Activated T-helper 1 cell treated with anti-CD3 and anti-CD28 coated beads, Interleukin-12 subunit alpha, Interleukin-12 subunit beta, Interleukin-2, Interleukin-4 antibody, amounts not matched to agents 30 ng/mL and 10 ng/mL and 1 ng/mL, durations not matched to agents 14 hours and 24 hours and 36 hours (primary cell): ENCODE measurements at regions of chr15 and their contacts with region 1.

Region 1: GRCh38 chr15:66356345-66357236 is at the start of gene TIPIN:
- DNase-seq: peak; percentile 96
- H3K4me3 Mint-ChIP-seq: peak within 1 kb of the TSS; percentile 96
- H3K27ac Mint-ChIP-seq: peak within 1 kb of the TSS; percentile 97
- H3K4me1 Mint-ChIP-seq: peaks cover 35% of the 10 kb centered on the region
- H3K27me3 Mint-ChIP-seq: no peaks in the 10 kb centered on the region
- total RNA-seq, gene TIPIN: 49.2 and 56.0 TPM in 2 replicates

Region 2: DNA sequence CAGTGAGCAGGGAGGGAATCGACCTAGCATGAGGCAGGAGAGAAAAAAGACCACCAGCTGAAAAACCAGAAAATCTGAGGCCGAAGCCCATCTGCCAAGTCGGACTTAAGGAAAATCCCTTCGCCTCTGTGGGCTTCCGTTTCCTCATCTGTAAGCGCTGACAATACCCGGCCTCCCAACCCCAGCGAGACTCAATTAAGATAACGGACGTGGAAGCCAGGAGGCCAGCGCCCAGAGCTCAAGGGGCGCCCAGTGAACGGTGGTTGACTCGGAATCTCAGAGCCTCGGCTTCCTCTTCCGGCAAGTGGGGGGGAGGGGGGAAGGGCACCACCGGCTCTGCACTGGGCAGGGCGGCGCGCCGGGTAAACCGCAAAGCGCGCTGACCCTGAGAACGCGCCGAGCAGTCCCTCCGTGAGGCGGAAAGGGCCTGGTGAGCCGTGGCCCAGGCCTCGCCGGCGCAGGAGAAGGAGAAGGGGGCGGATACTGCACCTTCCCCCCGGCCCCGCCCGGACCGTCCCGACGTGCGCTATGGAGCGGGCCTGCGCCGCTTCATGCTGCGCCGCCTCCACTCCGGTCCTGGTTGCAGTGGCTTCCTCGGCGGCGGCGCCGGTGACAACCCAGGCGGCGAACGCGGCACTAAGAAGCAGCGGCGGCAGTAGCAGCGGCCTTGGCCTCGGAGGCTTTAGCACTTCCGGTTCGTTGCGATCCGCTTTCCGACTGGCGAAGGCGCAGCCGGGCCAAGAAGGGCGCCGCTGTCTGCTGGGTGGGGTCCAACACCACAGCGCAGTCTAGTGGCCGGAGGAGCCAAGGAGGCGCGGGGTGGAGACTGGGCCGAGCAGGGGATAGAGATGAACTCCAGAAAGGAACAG is 839.4 kb before region 1 on chr15 and contains the start of gene DPP8:
- intact Hi-C with region 1: loop called (anchors 2 kb)
- DNase-seq: peak; percentile 92
- H3K4me3 Mint-ChIP-seq: peak within 1 kb of the TSS; percentile 90
- H3K27ac Mint-ChIP-seq: peak within 1 kb of the TSS; percentile 90
- H3K4me1 Mint-ChIP-seq: peaks cover 32% of the 10 kb centered on the region
- H3K27me3 Mint-ChIP-seq: no peaks in the 10 kb centered on the region
- total RNA-seq, gene DPP8: 34.8 and 35.6 TPM in 2 replicates

Region 3: DNA sequence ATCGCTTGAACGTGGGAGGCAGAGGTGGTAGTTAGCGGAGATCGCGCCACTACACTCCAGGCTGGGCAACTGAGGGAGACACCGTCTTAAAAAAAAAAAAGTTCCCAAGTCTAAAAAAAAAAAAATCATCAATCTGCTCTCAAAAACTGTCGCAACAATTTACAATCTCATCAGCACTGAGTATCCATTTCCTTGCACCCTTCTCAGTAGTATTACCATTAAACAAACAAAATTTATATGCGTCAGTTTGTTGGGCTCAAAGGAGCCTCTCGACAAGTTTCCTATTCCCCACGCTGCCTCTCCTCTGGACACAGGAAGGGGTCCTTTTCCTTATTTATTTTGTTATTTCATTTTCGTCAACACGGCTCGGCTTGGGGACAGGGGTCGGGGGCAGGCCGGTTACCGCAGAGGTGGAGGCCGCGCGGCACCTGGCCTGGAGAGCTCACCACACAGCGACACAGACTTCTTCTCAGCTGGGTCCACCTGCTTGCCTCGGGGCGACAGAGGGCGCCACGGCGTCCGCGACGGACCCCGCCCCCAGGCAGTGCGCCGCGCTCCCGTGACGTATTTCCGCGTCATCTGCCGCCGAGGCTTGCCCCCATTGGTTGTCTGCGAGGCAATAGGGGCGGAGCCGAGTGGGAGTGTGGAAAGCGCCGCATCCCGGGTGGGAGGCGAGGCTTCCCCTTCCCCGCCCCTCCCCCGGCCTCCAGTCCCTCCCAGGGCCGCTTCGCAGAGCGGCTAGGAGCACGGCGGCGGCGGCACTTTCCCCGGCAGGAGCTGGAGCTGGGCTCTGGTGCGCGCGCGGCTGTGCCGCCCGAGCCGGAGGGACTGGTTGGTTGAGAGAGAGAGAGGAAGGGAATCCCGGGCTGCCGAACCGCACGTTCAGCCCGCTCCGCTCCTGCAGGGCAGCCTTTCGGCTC is 29.9 kb after region 1 on chr15 and contains the start of gene MAP2K1:
- intact Hi-C with region 1: loop called (anchors 1 kb)
- DNase-seq: peak; percentile 98
- H3K4me3 Mint-ChIP-seq: peak within 1 kb of the TSS; percentile 99
- H3K27ac Mint-ChIP-seq: peak within 1 kb of the TSS; percentile 99
- H3K4me1 Mint-ChIP-seq: peaks cover 52% of the 10 kb centered on the region
- H3K27me3 Mint-ChIP-seq: no peaks in the 10 kb centered on the region
- total RNA-seq, gene MAP2K1: 82.5 and 86.6 TPM in 2 replicates

Region 4: DNA sequence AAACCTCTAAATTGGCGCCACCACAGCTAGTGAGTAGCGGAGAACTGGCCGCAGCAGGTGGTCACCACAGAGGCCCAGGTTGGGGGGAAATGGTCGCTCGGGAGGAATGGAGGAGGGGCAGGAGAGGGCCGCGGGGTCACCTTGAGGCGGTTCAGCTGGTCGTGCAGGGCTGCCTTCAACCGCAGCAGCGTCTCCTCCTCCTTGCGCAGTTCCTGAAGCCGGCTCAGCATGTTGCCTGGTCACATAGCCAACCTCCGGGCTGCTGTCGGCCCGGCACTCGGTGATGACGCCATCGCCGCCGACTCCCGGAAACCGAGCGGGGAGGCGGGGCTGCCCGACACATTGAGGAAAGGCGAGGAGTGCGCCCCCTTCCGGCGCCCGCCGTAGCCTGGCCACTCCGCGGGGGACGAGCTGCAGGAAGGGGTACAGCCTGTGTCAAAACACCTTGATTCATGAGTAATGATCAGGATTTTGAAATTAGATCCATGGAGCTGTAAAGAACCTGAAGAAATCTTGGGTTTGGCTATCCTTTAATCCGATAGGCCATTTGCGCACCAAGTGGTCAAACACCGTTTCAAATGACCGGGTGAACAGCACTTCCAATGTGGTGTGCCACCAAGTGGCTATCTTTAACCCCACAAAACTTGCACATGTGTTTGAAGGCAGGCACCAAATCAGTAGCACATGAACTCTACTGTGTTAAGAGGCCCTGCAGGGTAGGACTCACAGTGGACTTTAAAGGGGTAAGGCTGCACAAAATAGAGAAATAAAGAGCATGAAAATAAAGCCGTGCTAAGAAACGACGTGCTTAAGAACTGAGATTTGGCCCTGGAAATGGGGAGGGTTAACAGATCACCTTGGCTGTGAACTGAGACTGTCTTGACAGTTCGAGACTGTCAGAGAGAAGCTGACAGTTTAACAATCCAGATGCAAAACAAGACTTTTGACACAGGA is 141.2 kb after region 1 on chr15 and contains the start of gene SNAPC5:
- intact Hi-C with region 1: loop called (anchors 1 kb)
- DNase-seq: peak; percentile 97
- H3K4me3 Mint-ChIP-seq: peak within 1 kb of the TSS; percentile 98
- H3K27ac Mint-ChIP-seq: peak within 1 kb of the TSS; percentile 94
- H3K4me1 Mint-ChIP-seq: peaks cover 52% of the 10 kb centered on the region
- H3K27me3 Mint-ChIP-seq: no peaks in the 10 kb centered on the region
- total RNA-seq, gene SNAPC5: 37.3 and 39.0 TPM in 2 replicates